Activated naive CD4-positive, alpha-beta T cell treated with anti-CD3 and anti-CD28 coated beads for 36 hours (primary cell): ENCODE measurements at regions of chr11 and their contacts with region 1.

Region 1: GRCh38 chr11:61384271-61385242 is 7.8 kb upstream of the TMEM216 start:
- DNase-seq: no peak
- H3K4me3 Mint-ChIP-seq: no peak overlapping the region
- H3K27ac Mint-ChIP-seq: no peak overlapping the region
- H3K4me1 Mint-ChIP-seq: peaks cover 3% of the 10 kb centered on the region
- H3K27me3 Mint-ChIP-seq: no peaks in the 10 kb centered on the region

Region 2: DNA sequence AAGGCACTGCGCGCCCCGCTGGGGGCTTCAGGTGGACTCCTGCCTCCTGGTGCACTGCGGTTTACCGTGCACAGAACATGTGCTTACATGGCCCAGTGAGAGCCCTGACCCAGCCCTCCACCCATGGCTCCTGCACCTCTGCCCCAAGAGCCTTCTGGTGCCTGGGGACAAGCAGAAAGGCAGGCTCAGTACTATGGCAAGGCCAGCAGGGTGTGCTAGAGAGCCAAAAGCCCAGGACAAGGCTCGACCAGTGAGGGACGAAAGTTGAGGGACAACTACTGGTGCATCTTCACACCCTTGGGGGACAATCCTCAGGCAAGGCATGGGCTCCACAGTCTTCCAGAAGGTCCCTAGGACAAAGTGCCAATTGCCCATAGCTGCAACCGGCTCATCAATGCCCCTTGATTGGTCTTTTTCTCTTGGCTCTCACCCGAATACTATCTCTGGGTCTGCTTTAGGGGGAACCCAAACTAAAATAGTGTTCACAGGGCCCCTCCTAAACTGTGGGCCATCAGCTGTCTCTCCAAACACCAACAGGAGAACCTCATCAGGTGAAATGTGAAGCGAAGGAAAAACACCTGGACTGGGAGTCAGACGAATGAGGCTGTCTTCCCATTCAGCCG is 130.0 kb before region 1 on chr11:
- CTCF ChIA-PET with region 1: interaction called, 26 read pairs
- intact Hi-C with region 1: loop called (anchors 1 kb)
- DNase-seq: peak; percentile 80
- H3K4me3 Mint-ChIP-seq: no peak overlapping the region
- H3K27ac Mint-ChIP-seq: no peak overlapping the region
- H3K4me1 Mint-ChIP-seq: no peaks in the 10 kb centered on the region
- H3K27me3 Mint-ChIP-seq: no peaks in the 10 kb centered on the region

Region 3: DNA sequence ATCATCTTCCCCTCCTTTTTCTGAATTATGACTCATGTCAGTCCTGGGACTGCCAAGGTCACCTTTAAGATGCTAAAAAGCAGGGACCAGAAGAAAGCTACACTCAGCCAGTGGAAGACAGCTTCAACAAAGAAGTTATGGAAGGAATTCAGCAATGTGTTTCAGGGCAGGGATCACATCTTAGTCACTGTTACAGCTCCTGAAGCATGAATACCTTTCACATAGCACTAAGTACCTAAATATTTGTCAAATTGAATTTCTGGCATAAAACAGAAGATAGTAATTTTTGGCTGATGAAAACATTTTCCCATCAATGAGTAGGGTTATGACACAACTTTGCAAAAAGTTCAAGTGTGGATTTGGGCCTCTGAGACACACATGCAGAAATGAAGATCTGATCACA is 56.9 kb before region 1 on chr11:
- CTCF ChIA-PET with region 1: interaction called, 243 read pairs
- intact Hi-C with region 1: no loop called
- DNase-seq: no peak
- H3K4me3 Mint-ChIP-seq: no peak overlapping the region
- H3K27ac Mint-ChIP-seq: no peak overlapping the region
- H3K4me1 Mint-ChIP-seq: peaks cover 44% of the 10 kb centered on the region
- H3K27me3 Mint-ChIP-seq: no peaks in the 10 kb centered on the region

Region 4: GRCh38 chr11:61361686-61362541 is 22.6 kb before region 1 on chr11 and contains the starts of genes CYB561A3 and TMEM138:
- CTCF ChIA-PET with region 1: interaction called, 46 read pairs
- intact Hi-C with region 1: no loop called
- DNase-seq: peak; percentile 94
- H3K4me3 Mint-ChIP-seq: peak within 1 kb of the TSS; percentile 100
- H3K27ac Mint-ChIP-seq: peak within 1 kb of the TSS; percentile 96
- H3K4me1 Mint-ChIP-seq: peaks cover 42% of the 10 kb centered on the region
- H3K27me3 Mint-ChIP-seq: no peaks in the 10 kb centered on the region
- total RNA-seq, gene CYB561A3: 31.7 to 31.8 TPM
- total RNA-seq, gene TMEM138: 35.6 to 41.4 TPM

Region 5: GRCh38 chr11:61369372-61370219 is 15.0 kb before region 1 on chr11:
- CTCF ChIA-PET with region 1: interaction called, 25 read pairs
- intact Hi-C with region 1: no loop called
- DNase-seq: no peak
- H3K4me3 Mint-ChIP-seq: no peak overlapping the region
- H3K27ac Mint-ChIP-seq: peak overlapping the region; percentile 2
- H3K4me1 Mint-ChIP-seq: no peaks in the 10 kb centered on the region
- H3K27me3 Mint-ChIP-seq: no peaks in the 10 kb centered on the region

Region 6: GRCh38 chr11:62166371-62166770 is 781.8 kb after region 1 on chr11:
- CTCF ChIA-PET with region 1: no interaction called
- intact Hi-C with region 1: no loop called
- DNase-seq: no peak
- H3K4me3 Mint-ChIP-seq: no peak overlapping the region
- H3K27ac Mint-ChIP-seq: no peak overlapping the region
- H3K4me1 Mint-ChIP-seq: peaks cover 1% of the 10 kb centered on the region
- H3K27me3 Mint-ChIP-seq: peaks cover 15% of the 10 kb centered on the region

Region 7: DNA sequence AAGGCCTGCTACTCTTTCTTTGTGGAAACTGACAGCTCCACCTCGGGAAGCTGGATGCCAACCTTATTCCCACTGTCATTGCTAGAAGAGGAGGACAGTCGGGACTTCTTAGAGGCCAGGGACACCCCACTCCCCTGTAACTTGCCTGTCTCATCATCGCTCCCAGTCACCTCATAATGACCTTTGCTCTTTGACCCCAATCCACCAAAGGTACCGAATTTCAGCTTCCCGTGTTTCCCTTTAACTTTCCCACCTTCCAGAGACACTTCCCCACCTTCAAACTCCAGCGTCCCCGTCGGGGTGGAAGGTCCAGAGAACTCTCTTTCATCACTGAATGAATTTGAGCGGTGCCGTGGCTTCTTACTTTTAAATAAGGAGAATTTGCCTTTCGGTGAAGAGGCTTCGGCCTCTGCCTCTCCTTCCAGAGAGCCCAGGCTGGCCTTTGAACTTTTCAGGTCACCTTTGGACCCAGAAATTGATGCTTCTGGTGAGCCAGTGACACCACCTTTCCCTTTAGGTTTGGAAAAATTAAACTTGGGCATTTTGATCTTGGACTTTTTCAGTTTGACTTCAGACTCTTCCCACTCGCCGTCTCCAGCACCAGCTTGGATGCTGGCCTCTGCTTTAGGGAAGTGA is 1132.3 kb after region 1 on chr11:
- CTCF ChIA-PET with region 1: no interaction called
- intact Hi-C with region 1: no loop called
- DNase-seq: no peak
- H3K4me3 Mint-ChIP-seq: no peak overlapping the region
- H3K27ac Mint-ChIP-seq: no peak overlapping the region
- H3K4me1 Mint-ChIP-seq: no peaks in the 10 kb centered on the region
- H3K27me3 Mint-ChIP-seq: no peaks in the 10 kb centered on the region